ENCODE measurements at regions of chr18 and their contacts with region 1.

Region 1: GRCh38 chr18:60277855-60278480 is 94.6 kb downstream of the MC4R start:
- DNase-seq: no peak
- ATAC-seq: no peak
- H3K4me3 ChIP-seq: no peak overlapping the region
- H3K27ac ChIP-seq: no peak overlapping the region
- H3K4me1 ChIP-seq: no peaks in the 10 kb centered on the region
- H3K27me3 ChIP-seq: no peaks in the 10 kb centered on the region
- CTCF ChIP-seq: no peak
- EP300 ChIP-seq: no peak
- POLR2A ChIP-seq: no peak
- RAD21 ChIP-seq: no peak

Region 2: DNA sequence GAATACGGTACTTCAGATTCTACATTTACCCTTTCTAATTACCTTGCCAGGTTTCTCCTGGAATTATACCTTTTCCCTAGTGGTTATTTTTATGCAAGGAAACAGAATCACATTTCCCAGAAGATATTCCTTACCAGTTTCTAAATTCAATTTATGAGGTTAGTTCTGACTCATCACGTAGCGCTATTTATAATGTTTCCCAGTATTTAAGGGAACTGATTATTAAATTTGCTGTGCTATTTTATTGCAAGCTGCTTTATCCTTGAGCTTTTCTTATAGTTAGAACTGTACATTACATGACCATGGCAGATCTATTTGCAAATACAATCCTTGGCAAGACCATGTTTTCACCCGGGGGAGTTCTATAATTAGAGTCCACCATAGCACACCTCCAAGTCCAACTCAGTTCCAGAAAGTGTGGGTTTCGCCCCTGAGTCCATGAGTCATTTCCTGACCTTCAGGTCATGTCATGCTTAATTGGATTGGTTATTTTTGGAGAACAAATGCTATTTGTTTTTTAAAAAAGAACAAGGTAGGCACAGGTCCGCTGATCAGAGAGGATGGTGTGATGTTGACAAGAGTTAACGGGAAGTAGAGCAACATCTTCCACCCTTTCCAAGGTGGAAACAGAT is 1286.7 kb before region 1 on chr18:
- CTCF ChIA-PET with region 1: no interaction called
- POLR2A ChIA-PET with region 1: no interaction called
- in situ Hi-C with region 1: no loop called
- intact Hi-C with region 1: no loop called
- DNase-seq: no peak
- ATAC-seq: no peak
- H3K4me3 ChIP-seq: no peak overlapping the region
- H3K27ac ChIP-seq: no peak overlapping the region
- H3K4me1 ChIP-seq: no peaks in the 10 kb centered on the region
- H3K27me3 ChIP-seq: peaks cover 0 to 32% of the 10 kb centered on the region in 2 experiments; a peak in 2 of 5 replicates
- CTCF ChIP-seq: no peak
- EP300 ChIP-seq: no peak
- POLR2A ChIP-seq: no peak
- RAD21 ChIP-seq: no peak

Region 3: GRCh38 chr18:59332986-59333385 is 945.0 kb before region 1 on chr18:
- CTCF ChIA-PET with region 1: no interaction called
- POLR2A ChIA-PET with region 1: no interaction called
- in situ Hi-C with region 1: no loop called
- intact Hi-C with region 1: loop called (anchors 5 kb)
- DNase-seq: no peak
- ATAC-seq: no peak
- H3K4me3 ChIP-seq: no peak overlapping the region
- H3K27ac ChIP-seq: no peak overlapping the region
- H3K4me1 ChIP-seq: no peaks in the 10 kb centered on the region
- H3K27me3 ChIP-seq: no peaks in the 10 kb centered on the region
- CTCF ChIP-seq: no peak
- EP300 ChIP-seq: no peak
- POLR2A ChIP-seq: no peak
- RAD21 ChIP-seq: no peak

Region 4: GRCh38 chr18:59631583-59632181 is 646.3 kb before region 1 on chr18:
- CTCF ChIA-PET with region 1: no interaction called
- POLR2A ChIA-PET with region 1: no interaction called
- in situ Hi-C with region 1: no loop called
- intact Hi-C with region 1: no loop called
- DNase-seq: peak; percentile 1
- ATAC-seq: no peak
- H3K4me3 ChIP-seq: no peak overlapping the region
- H3K27ac ChIP-seq: no peak overlapping the region
- H3K4me1 ChIP-seq: no peaks in the 10 kb centered on the region
- H3K27me3 ChIP-seq: peaks cover 0 to 1% of the 10 kb centered on the region in 2 experiments; a peak in 2 of 5 replicates
- CTCF ChIP-seq: peak; percentile 52
- EP300 ChIP-seq: no peak
- POLR2A ChIP-seq: no peak
- RAD21 ChIP-seq: no peak